ENCODE measurements at regions of chr3 and their contacts with region 1.

Region 1: DNA sequence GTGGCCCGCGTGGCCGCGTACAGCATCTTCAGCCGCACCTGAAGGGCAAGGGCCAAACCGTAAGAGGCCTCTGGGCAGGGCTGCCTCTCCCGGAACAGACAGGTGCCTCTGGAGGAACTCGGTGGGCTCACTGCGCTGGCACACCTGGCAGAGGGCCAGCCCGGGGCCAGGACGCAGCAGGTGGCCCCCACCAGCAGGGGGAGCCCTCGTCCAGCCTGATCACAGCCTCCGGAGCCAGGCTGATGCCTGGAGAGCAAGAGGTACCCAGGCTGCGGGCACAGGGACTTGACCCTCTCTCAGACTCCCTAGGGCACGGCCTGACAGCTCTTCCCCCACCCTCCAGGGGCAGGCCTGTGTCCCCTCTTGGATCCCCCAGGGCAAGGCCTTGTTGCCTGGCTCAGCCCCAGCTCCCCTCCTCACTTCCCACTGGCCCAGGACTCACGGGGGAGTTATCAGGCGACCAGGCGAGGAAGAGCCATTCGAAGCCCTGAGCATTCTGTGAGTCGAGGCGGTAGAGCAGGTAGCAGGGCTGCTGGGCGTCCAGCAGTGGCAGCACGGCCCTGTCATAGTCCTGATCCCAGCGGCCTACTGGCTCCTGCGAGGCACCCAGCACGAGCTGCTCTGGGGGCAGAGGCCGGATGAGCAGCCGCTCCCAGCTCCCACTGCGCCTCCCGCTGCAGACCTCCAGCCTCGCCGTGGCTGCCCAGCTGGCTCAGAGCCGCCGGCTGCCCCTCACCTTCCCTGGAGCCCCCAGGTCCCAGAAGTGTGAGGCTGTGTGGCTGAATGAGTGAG is 6.3 kb upstream of the TLR9 start:
- DNase-seq: peak; percentile 94
- ATAC-seq: peak; percentile 78
- H3K4me3 Mint-ChIP-seq: peak overlapping the region; percentile 52
- H3K27ac Mint-ChIP-seq: peak overlapping the region; percentile 75
- H3K4me1 Mint-ChIP-seq: peaks cover 44% of the 10 kb centered on the region
- H3K27me3 Mint-ChIP-seq: no peaks in the 10 kb centered on the region

Region 2: DNA sequence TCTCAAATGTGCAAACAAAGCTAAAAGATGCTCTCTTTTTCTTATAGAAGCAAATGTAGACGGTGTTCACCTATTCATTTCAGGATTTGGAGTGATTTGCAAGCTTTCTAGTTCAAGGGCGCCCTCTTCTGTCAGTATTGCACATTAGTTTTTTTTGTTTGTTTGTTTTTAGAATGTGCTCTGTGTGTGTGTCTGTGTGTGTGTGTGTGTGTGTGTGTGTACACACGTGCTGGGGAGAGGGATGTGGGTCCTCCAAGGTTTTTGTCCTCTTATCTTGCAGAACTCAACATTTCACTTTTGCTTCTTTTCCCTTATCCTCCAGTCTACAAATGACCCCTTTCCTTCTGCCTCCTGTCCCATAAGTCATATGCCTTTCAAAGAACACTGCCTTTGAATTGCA is 107.9 kb after region 1 on chr3:
- POLR2A ChIA-PET with region 1: interaction called, 19 read pairs
- DNase-seq: no peak
- ATAC-seq: peak; percentile 63
- H3K4me3 Mint-ChIP-seq: no peak overlapping the region
- H3K27ac Mint-ChIP-seq: no peak overlapping the region
- H3K4me1 Mint-ChIP-seq: peaks cover 8% of the 10 kb centered on the region
- H3K27me3 Mint-ChIP-seq: no peaks in the 10 kb centered on the region

Measured in activated naive CD8-positive, alpha-beta T cell treated with anti-CD3 and anti-CD28 coated beads, Interleukin-2, amount 10 ng/mL, durations not matched to agents 7 days and 5 days (primary cell).